ENCODE measurements at regions of chr9 and their contacts with region 1.

Region 1: GRCh38 chr9:7976167-7976755 is 176.7 kb upstream of the DMAC1 start:
- DNase-seq: peak; percentile 71
- H3K4me3 Mint-ChIP-seq: no peak overlapping the region
- H3K27ac Mint-ChIP-seq: peak overlapping the region; percentile 67
- H3K4me1 Mint-ChIP-seq: peaks cover 67% of the 10 kb centered on the region
- H3K27me3 Mint-ChIP-seq: no peaks in the 10 kb centered on the region

Region 2: DNA sequence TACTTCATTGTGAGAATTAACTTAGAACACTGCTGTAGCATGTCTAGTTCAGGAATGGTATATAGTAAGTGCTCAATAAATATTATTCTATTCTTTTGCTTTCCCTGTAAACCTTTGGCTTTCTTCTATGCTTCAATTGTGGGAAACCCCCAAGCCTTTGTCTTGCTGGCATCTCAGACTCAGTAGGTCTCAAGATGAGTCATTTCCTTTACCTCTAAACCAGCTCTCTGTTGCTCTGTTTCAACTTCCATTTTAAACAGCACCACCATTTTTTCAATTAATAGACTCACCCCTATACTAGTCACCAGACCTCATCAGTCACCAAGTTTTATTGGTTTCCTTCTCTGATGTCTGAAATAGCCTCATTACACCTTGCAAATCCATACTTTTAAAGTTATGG is 220.2 kb before region 1 on chr9:
- CTCF ChIA-PET with region 1: no interaction called
- intact Hi-C with region 1: loop called (anchors 1 kb)
- DNase-seq: peak; percentile 46
- H3K4me3 Mint-ChIP-seq: no peak overlapping the region
- H3K27ac Mint-ChIP-seq: peak overlapping the region; percentile 72
- H3K4me1 Mint-ChIP-seq: peaks cover 24% of the 10 kb centered on the region
- H3K27me3 Mint-ChIP-seq: no peaks in the 10 kb centered on the region

Region 3: DNA sequence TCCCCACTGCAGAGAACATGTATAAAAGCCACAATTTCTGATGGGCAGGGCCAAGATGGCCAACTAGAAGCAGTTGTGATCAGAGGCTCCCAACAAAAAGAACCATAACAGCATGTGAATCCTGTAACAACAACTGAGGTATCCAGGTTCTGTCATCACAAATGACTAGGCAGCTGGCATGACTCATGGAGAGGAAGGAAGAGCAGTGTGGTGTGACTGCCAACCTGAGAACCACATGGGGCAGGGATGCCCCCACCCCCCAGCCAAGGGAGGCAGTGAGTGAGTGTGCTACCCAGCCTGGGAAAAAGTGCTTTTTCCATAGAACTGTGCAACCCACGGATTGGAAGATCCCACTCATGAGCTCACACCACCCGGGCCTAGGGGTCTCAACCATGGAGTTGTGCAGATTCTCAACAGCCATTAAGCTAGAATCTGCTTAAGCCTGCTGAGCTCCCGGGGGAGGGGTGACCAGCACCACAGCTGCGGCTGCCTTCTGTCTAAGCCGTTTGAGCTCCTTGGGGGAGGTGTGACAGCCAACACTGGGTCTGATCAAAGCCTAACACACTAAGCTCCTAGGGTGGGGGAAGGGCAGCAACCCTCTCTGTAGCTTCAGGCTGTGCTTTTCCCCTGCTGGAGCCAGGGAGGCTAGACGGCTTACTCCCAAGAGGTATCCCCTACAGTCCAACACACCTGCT is 96.6 kb before region 1 on chr9:
- CTCF ChIA-PET with region 1: no interaction called
- intact Hi-C with region 1: loop called (anchors 1 kb)
- DNase-seq: peak; percentile 68
- H3K4me3 Mint-ChIP-seq: no peak overlapping the region
- H3K27ac Mint-ChIP-seq: no peak overlapping the region
- H3K4me1 Mint-ChIP-seq: peaks cover 5% of the 10 kb centered on the region
- H3K27me3 Mint-ChIP-seq: no peaks in the 10 kb centered on the region

Region 4: GRCh38 chr9:7988644-7989280 is 12.5 kb after region 1 on chr9:
- CTCF ChIA-PET with region 1: no interaction called
- intact Hi-C with region 1: no loop called
- DNase-seq: peak; percentile 17
- H3K4me3 Mint-ChIP-seq: no peak overlapping the region
- H3K27ac Mint-ChIP-seq: no peak overlapping the region
- H3K4me1 Mint-ChIP-seq: peaks cover 16% of the 10 kb centered on the region
- H3K27me3 Mint-ChIP-seq: no peaks in the 10 kb centered on the region

Region 5: DNA sequence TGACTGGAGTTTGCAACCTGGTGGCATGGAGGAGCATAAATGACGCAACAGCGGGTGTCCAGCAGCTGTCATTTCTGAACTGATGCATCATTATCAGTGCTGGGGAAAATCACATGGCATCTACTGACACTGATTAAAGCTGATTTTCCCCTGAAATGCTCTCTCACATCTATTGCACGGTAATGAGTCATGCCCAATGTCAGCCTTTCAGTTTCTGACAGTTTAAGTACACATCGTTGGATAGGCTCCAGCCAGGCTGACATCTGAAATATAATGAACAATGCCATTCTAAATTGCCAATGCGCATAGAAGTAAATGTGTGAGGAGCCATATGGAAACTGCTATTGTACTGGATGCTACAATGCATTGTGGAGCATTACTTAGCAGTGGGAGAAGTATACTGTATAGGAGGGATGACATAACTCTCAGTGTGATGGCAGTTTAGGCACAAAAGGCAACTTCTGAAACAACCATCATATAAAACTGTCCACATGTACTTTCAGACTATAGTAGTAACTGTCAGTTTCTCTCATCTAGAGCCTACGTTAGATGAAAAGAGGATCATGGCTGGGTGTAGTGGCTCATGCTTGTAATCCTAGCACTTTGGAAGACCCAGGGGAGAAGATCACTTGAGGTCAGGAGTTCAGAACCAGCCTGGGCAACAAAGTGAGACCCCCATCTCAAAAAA is 212.6 kb after region 1 on chr9:
- CTCF ChIA-PET with region 1: no interaction called
- intact Hi-C with region 1: loop called (anchors 1 kb)
- DNase-seq: peak; percentile 42
- H3K4me3 Mint-ChIP-seq: no peak overlapping the region
- H3K27ac Mint-ChIP-seq: no peak overlapping the region
- H3K4me1 Mint-ChIP-seq: peaks cover 18% of the 10 kb centered on the region
- H3K27me3 Mint-ChIP-seq: peaks cover 15% of the 10 kb centered on the region

Region 6: DNA sequence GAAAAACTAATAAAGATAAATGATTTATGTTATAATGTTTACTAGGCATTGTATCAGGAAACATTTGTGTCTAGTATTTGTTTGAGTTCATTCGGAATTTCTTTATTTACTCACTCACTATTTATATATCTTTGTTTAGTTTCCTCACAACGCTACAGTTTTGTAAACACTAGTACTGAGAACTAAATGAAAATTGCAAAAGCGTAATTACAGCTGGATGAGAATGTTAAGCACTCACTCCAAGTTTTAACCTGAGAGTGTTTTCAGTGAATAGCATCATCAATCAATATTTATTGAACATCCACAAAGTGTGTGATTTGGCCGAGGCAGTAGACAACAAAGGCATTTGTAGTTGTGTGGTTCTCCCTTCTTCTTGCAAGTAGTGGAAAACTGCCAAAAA is 792.9 kb after region 1 on chr9:
- CTCF ChIA-PET with region 1: no interaction called
- intact Hi-C with region 1: no loop called
- DNase-seq: no peak
- H3K4me3 Mint-ChIP-seq: no peak overlapping the region
- H3K27ac Mint-ChIP-seq: no peak overlapping the region
- H3K4me1 Mint-ChIP-seq: no peaks in the 10 kb centered on the region
- H3K27me3 Mint-ChIP-seq: no peaks in the 10 kb centered on the region